Breast epithelium (tissue), 4 donors: ENCODE measurements at regions of chr4 and their contacts with region 1.

Region 1: DNA sequence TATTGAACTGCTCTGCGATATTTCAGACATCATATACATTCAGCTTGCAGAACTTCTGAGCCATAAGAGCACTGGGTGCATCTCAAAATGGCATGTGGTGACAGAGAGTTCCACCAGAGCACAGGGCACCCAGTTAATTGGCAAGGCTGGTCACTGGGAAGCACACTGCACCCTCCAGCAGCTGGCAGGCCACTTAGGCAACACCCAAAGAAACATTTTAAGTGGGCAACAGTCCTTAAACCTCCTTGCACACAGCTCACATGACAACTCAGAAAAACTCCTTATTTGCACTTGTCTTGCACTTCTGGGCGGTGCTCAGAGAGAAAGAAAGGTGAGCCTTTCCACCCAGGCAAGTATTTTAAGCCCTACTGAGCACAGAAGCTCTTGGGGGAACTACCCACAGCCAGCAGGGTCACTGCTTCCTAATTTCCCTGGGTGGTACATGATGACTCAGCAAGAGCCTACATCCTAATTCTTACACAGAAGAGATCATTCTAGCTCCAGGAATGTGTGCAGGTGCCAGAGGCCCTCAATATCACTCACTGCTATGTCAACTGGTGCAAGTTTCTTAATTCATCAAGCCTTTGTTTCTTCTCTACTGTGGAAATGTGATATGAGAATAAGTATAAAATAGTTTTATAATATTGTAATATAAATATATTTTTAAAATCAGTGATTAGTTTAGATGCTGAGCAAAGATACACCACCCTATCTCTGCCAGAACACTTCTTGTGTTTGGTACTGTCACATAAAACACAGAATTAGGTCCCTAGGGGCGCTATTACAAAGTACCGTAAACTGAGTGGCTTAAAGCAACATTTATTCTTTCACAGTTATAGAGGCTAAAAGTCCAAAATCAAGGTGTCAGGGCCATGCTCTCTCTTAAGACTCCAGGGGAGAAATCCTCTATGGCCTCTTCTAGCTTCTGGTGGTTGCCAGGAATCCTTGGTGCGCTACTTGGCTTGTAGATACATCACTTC is 155.1 kb upstream of the PPARGC1A start:
- DNase-seq: no peak
- H3K4me3 ChIP-seq: no peak overlapping the region
- H3K27ac ChIP-seq: no peak overlapping the region
- H3K4me1 ChIP-seq: no peaks in the 10 kb centered on the region
- H3K27me3 ChIP-seq: no peaks in the 10 kb centered on the region
- CTCF ChIP-seq: no peak
- POLR2A ChIP-seq: no peak

Region 2: DNA sequence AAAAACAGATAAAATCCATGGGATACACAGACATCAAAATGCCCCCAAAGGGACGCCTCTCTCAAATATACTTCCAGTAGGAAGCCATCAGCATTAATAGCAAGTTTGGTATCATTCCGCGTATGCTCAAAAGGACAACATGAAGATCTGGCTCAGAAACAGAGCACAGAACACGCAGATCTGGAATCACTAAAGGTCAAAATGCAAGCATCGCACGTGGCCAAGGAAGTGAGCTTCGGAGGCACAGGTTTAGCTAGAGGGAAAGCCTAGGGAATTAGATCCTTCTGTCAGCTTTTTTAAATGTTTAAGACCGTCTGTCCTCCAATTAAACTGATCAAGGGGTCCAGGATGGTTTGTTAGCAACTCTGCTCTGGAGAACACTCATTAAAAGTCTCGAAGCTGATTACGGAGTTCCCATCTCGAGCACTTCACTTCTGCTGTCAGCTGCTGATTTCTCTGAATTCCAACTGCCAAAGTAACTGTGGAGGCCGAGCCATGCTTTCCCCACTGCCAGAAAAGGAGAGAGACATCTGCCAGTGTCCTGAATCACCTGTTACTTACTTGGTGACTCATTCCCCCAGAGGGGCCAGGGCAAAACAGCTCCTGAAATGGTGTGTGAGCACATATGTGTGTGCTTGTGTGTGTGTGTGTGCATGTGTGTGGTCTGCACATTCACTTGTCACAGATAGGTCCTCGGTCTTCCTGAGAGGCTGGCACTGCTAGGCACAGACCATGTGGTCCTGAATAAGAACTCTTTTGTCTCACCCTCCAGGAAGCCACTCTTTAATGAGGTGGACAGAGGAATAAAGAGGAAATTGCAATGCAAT is 22.7 kb after region 1 on chr4:
- intact Hi-C with region 1: no loop called
- DNase-seq: peak in 1 of 2 donors; percentile 33
- H3K4me3 ChIP-seq: no peak overlapping the region
- H3K27ac ChIP-seq: no peak overlapping the region
- H3K4me1 ChIP-seq: no peaks in the 10 kb centered on the region
- H3K27me3 ChIP-seq: no peaks in the 10 kb centered on the region
- CTCF ChIP-seq: no peak
- POLR2A ChIP-seq: no peak

Region 3: GRCh38 chr4:24105183-24106038 is 60.5 kb after region 1 on chr4:
- intact Hi-C with region 1: loop called (anchors 2 kb)
- DNase-seq: no peak
- H3K4me3 ChIP-seq: no peak overlapping the region
- H3K27ac ChIP-seq: peak overlapping the region in 1 of 2 donors; percentile 43
- H3K4me1 ChIP-seq: no peaks in the 10 kb centered on the region
- H3K27me3 ChIP-seq: no peaks in the 10 kb centered on the region
- CTCF ChIP-seq: no peak
- POLR2A ChIP-seq: no peak

Region 4: DNA sequence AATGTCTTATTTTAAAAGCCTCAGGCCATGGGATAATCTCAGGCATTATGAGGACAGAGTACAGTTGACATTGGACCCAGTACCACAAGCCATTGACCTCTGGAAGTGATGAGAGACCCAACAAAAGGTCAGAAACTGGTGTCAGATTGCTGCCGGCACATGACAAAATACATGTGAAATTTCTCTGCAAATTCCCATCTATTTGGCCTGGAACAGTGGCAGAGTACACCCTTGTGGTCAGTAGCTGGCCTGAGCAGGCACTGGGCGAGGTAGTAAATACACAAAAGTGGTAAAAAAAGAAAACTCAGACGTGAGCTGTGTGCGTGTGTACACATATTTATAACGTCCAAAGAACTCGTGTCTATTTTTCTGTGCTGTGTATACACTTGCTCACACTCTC is 383.9 kb after region 1 on chr4:
- intact Hi-C with region 1: no loop called
- DNase-seq: no peak
- H3K4me3 ChIP-seq: no peak overlapping the region
- H3K27ac ChIP-seq: no peak overlapping the region
- H3K4me1 ChIP-seq: no peaks in the 10 kb centered on the region
- H3K27me3 ChIP-seq: no peaks in the 10 kb centered on the region
- CTCF ChIP-seq: no peak
- POLR2A ChIP-seq: no peak

Region 5: GRCh38 chr4:25202431-25202830 is 1157.5 kb after region 1 on chr4:
- intact Hi-C with region 1: no loop called
- DNase-seq: no peak
- H3K4me3 ChIP-seq: no peak overlapping the region
- H3K27ac ChIP-seq: no peak overlapping the region
- H3K4me1 ChIP-seq: no peaks in the 10 kb centered on the region
- H3K27me3 ChIP-seq: no peaks in the 10 kb centered on the region
- CTCF ChIP-seq: no peak
- POLR2A ChIP-seq: no peak

Region 6: DNA sequence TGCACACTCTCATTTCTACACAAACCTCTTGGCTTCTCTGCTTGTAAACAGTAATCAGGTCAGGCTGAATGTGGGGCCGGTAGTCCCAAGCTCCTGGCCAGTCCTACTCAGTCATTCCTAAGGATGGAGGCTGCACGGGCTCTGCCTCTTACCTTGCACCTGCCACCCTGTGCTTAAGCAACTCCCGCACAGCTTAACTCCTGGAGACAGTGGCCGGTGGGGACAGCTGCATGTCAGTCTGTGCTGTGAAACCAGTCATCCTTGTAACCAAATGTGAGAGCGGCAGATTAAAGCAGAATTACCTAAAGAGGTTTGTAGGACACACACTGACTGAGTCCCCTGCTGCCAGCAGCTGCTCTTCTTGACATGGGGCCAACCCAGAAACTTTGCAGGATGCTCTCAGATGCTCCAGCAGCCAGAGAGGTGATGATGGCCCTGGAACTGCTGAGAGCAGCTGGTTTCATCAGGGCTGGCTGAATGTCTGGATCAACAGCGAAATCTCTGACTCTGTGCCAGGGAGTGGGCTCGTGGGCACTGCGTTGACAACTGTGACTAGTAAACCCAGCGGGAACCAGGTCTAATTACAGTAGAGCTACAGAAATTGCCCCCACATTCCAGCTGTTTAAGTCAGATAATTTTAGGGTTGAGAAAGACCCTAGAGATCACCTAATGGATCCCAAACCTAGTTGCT is 1455.9 kb after region 1 on chr4:
- intact Hi-C with region 1: no loop called
- DNase-seq: no peak
- H3K4me3 ChIP-seq: no peak overlapping the region
- H3K27ac ChIP-seq: no peak overlapping the region
- H3K4me1 ChIP-seq: no peaks in the 10 kb centered on the region
- H3K27me3 ChIP-seq: no peaks in the 10 kb centered on the region
- CTCF ChIP-seq: no peak
- POLR2A ChIP-seq: no peak